HepG2 (cell line): ENCODE measurements at regions of chr4 and their contacts with region 1.

Region 1: DNA sequence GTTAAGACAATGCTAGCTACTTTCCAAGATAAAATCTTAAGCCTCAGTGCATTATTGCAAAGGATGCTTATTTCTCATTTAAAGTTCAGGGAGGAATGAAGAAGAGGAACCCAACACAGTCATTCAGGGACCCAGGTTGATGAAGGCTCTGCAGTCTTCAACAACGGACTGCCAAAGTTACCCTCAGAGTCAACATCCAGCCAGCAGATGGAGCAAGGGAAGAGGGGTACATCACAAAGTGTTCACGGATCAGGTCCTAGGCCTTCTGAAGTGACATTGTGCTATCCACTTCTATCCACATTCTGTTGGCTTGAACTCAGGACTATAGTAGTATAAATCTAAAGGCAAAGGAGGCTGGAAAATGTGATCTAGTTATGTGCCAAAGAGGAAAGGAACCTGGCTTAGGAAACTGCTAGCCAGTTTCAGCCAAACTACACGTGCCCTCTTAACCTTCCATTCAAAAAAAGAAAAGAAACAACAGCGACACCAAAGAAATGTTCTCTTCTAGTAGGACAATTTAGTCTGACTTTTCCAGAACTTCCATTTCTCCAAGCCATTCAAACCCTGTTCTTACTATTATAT is 28.8 kb downstream of the NKX6-1 start:
- DNase-seq: peak; percentile 17
- ATAC-seq: peak; percentile 84
- H3K4me3 ChIP-seq: no peak overlapping the region
- H3K27ac ChIP-seq: no peak overlapping the region
- H3K4me1 ChIP-seq: no peaks in the 10 kb centered on the region
- H3K27me3 ChIP-seq: no peaks in the 10 kb centered on the region
- CTCF ChIP-seq: peak; percentile 52
- EP300 ChIP-seq: no peak
- POLR2A ChIP-seq: no peak
- RAD21 ChIP-seq: no peak

Region 2: GRCh38 chr4:84503495-84504437 is 33.5 kb after region 1 on chr4:
- CTCF ChIA-PET with region 1: interaction called, 4 read pairs
- POLR2A ChIA-PET with region 1: no interaction called
- in situ Hi-C with region 1: no loop called
- intact Hi-C with region 1: loop called (anchors 1 kb)
- DNase-seq: peak; percentile 46
- ATAC-seq: peak; percentile 98
- H3K4me3 ChIP-seq: no peak overlapping the region
- H3K27ac ChIP-seq: no peak overlapping the region
- H3K4me1 ChIP-seq: 0 out of 2 replicates have a peak, but pooled peaks cover 2% of the 10 kb centered on the region
- H3K27me3 ChIP-seq: peaks cover 4 to 50% of the 10 kb centered on the region in 2 experiments; a peak in 4 of 5 replicates
- CTCF ChIP-seq: peak; percentile 82
- EP300 ChIP-seq: no peak
- POLR2A ChIP-seq: no peak
- RAD21 ChIP-seq: peak; percentile 47; the same call in 1 of the 2 replicates